Activated CD4-positive, alpha-beta memory T cell treated with anti-CD3 and anti-CD28 coated beads, Interleukin-2, amount 10 ng/mL, durations not matched to agents 7 days and 5 days (primary cell): ENCODE measurements at regions of chr3 and their contacts with region 1.

Region 1: DNA sequence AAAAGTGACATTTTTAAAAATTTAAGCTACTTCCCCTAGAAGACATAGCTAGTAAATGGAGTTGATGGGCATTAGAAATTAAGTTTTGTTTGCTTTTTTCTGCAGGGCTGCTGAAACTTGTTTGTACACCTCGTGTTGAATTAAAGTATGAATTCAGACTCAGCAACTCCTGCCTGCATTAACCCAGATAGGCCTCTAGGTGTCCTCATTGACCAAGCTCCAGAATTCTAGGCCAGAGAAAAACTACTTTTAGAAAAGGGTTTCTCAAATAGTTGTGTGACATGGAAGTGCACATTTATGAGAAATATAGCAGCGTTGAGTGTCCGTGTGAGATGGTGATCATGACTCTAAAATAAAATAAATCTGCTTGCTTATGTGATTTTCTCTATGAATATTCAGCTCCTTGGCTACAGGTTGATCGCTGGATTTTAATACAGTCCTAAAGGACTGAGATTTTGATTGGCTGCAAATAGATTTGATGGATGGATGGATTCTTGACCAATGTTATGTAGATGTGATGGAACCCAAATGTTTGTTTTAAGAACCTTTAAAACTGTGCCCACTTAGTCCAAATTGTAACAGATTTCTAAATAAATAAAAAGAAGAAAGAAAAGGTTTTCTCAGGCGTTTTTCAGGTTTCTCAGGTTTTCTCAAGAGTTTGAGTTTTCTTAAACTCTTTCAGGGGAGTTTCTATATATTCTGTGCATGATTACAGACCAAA is 39.4 kb upstream of the LMOD3 start:
- DNase-seq: peak; percentile 42
- H3K4me3 Mint-ChIP-seq: no peak overlapping the region
- H3K27ac Mint-ChIP-seq: no peak overlapping the region
- H3K4me1 Mint-ChIP-seq: peaks cover 15% of the 10 kb centered on the region
- H3K27me3 Mint-ChIP-seq: peaks cover 7% of the 10 kb centered on the region

Region 2: GRCh38 chr3:69120879-69121464 is 40.8 kb before region 1 on chr3:
- CTCF ChIA-PET with region 1: interaction called, 33 read pairs
- POLR2A ChIA-PET with region 1: no interaction called
- DNase-seq: peak; percentile 83
- H3K4me3 Mint-ChIP-seq: no peak overlapping the region
- H3K27ac Mint-ChIP-seq: no peak overlapping the region
- H3K4me1 Mint-ChIP-seq: peaks cover 5% of the 10 kb centered on the region
- H3K27me3 Mint-ChIP-seq: no peaks in the 10 kb centered on the region

Region 3: GRCh38 chr3:69236812-69237707 is 75.3 kb after region 1 on chr3:
- CTCF ChIA-PET with region 1: interaction called, 13 read pairs
- POLR2A ChIA-PET with region 1: interaction called, 3 read pairs
- DNase-seq: no peak
- H3K4me3 Mint-ChIP-seq: peak overlapping the region; percentile 70
- H3K27ac Mint-ChIP-seq: peak overlapping the region; percentile 48
- H3K4me1 Mint-ChIP-seq: peaks cover 30% of the 10 kb centered on the region
- H3K27me3 Mint-ChIP-seq: no peaks in the 10 kb centered on the region

Region 4: GRCh38 chr3:69318410-69318809 is 156.7 kb after region 1 on chr3:
- CTCF ChIA-PET with region 1: interaction called, 22 read pairs
- POLR2A ChIA-PET with region 1: no interaction called
- DNase-seq: no peak
- H3K4me3 Mint-ChIP-seq: no peak overlapping the region
- H3K27ac Mint-ChIP-seq: no peak overlapping the region
- H3K4me1 Mint-ChIP-seq: no peaks in the 10 kb centered on the region
- H3K27me3 Mint-ChIP-seq: no peaks in the 10 kb centered on the region

Region 5: GRCh38 chr3:69441040-69441439 is 279.3 kb after region 1 on chr3:
- CTCF ChIA-PET with region 1: interaction called, 10 read pairs
- POLR2A ChIA-PET with region 1: no interaction called
- DNase-seq: no peak
- H3K4me3 Mint-ChIP-seq: no peak overlapping the region
- H3K27ac Mint-ChIP-seq: no peak overlapping the region
- H3K4me1 Mint-ChIP-seq: peaks cover 4% of the 10 kb centered on the region
- H3K27me3 Mint-ChIP-seq: peaks cover 4% of the 10 kb centered on the region